ENCODE measurements at regions of chr3 and their contacts with region 1.

Region 1: GRCh38 chr3:42846685-42847522 is 28.8 kb downstream of the CYP8B1 start:
- DNase-seq: no peak
- ATAC-seq: peak; percentile 90
- H3K4me3 Mint-ChIP-seq: peak overlapping the region; percentile 66
- H3K27ac Mint-ChIP-seq: peak overlapping the region; percentile 85
- H3K4me1 Mint-ChIP-seq: peaks cover 31% of the 10 kb centered on the region
- H3K27me3 Mint-ChIP-seq: no peaks in the 10 kb centered on the region
- CTCF ChIP-seq: no peak

Region 2: DNA sequence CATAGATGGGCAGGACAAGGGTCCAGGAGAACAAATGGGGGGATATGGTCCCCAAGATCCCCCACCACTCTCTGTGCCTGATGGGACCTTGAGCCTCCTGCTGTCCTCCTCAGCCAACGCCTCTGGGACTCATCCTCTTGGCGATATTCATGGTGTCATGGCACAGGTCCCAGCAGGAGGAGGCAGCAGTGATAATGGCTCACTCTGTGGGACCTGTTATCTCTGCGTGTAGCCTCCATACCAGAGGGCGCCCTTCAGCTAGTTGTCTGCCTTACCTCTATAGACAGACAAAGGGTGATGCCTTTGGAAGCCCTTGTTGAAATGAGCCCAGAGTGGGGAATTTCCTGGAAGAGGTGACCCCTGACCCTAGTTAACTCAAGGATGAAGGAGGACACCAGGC is 186.0 kb before region 1 on chr3:
- CTCF ChIA-PET with region 1: no interaction called
- POLR2A ChIA-PET with region 1: no interaction called
- intact Hi-C with region 1: loop called (anchors 1 kb)
- DNase-seq: no peak
- ATAC-seq: no peak
- H3K4me3 Mint-ChIP-seq: no peak overlapping the region
- H3K27ac Mint-ChIP-seq: no peak overlapping the region
- H3K4me1 Mint-ChIP-seq: peaks cover 10% of the 10 kb centered on the region
- H3K27me3 Mint-ChIP-seq: no peaks in the 10 kb centered on the region
- CTCF ChIP-seq: no peak

Region 3: GRCh38 chr3:42831321-42831713 is 15.6 kb before region 1 on chr3:
- CTCF ChIA-PET with region 1: interaction called, 5 read pairs
- POLR2A ChIA-PET with region 1: no interaction called
- intact Hi-C with region 1: loop called (anchors 2 kb)
- DNase-seq: peak; percentile 56
- ATAC-seq: peak; percentile 78
- H3K4me3 Mint-ChIP-seq: no peak overlapping the region
- H3K27ac Mint-ChIP-seq: no peak overlapping the region
- H3K4me1 Mint-ChIP-seq: peaks cover 4% of the 10 kb centered on the region
- H3K27me3 Mint-ChIP-seq: peaks cover 8% of the 10 kb centered on the region
- CTCF ChIP-seq: no peak